ENCODE measurements at regions of chr9 and their contacts with region 1.

Region 1: GRCh38 chr9:76393963-76394679 is at the start of gene RFK:
- DNase-seq: peak; percentile 96
- H3K4me3 Mint-ChIP-seq: peak within 1 kb of the TSS; percentile 98
- H3K27ac Mint-ChIP-seq: peak within 1 kb of the TSS; percentile 93
- H3K4me1 Mint-ChIP-seq: peaks cover 33% of the 10 kb centered on the region
- H3K27me3 Mint-ChIP-seq: no peaks in the 10 kb centered on the region
- total RNA-seq, gene RFK: 7.4 to 7.7 TPM

Region 2: GRCh38 chr9:75890472-75891276 is 503.4 kb before region 1 on chr9 and contains the start of gene PCSK5:
- CTCF ChIA-PET with region 1: no interaction called
- POLR2A ChIA-PET with region 1: no interaction called
- intact Hi-C with region 1: loop called (anchors 5 kb)
- DNase-seq: peak; percentile 90
- H3K4me3 Mint-ChIP-seq: peak within 1 kb of the TSS; percentile 91
- H3K27ac Mint-ChIP-seq: peak within 1 kb of the TSS; percentile 61
- H3K4me1 Mint-ChIP-seq: peaks cover 28% of the 10 kb centered on the region
- H3K27me3 Mint-ChIP-seq: peaks cover 13% of the 10 kb centered on the region
- total RNA-seq, gene PCSK5: 2.0 to 2.1 TPM

Region 3: DNA sequence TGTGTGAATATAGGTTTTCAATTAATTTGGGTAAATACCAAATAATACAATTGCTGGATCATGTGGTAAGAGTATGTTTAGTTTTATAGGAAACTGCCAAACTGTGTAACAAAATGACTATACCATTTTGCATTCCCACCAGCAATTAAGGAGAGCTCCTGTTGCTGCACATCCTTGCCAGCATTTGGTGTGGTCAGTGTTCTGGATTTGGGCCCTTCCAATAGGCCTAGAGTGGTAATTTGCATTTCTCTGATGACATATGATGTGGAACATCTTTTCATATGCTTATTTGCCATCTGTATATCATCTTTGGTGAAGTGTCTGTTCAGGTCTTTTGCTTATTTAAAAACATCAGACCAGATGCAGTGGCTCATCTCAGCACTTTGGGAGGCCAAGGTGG is 11.7 kb after region 1 on chr9:
- CTCF ChIA-PET with region 1: interaction called, 14 read pairs
- POLR2A ChIA-PET with region 1: no interaction called
- intact Hi-C with region 1: no loop called
- DNase-seq: no peak
- H3K4me3 Mint-ChIP-seq: no peak overlapping the region
- H3K27ac Mint-ChIP-seq: no peak overlapping the region
- H3K4me1 Mint-ChIP-seq: peaks cover 13% of the 10 kb centered on the region
- H3K27me3 Mint-ChIP-seq: no peaks in the 10 kb centered on the region

Region 4: GRCh38 chr9:76441551-76442322 is 47.6 kb after region 1 on chr9:
- CTCF ChIA-PET with region 1: interaction called, 8 read pairs
- POLR2A ChIA-PET with region 1: interaction called, 15 read pairs
- intact Hi-C with region 1: loop called (anchors 1 kb)
- DNase-seq: peak; percentile 72
- H3K4me3 Mint-ChIP-seq: peak overlapping the region; percentile 77
- H3K27ac Mint-ChIP-seq: peak overlapping the region; percentile 97
- H3K4me1 Mint-ChIP-seq: peaks cover 50% of the 10 kb centered on the region
- H3K27me3 Mint-ChIP-seq: peaks cover 1% of the 10 kb centered on the region

Region 5: DNA sequence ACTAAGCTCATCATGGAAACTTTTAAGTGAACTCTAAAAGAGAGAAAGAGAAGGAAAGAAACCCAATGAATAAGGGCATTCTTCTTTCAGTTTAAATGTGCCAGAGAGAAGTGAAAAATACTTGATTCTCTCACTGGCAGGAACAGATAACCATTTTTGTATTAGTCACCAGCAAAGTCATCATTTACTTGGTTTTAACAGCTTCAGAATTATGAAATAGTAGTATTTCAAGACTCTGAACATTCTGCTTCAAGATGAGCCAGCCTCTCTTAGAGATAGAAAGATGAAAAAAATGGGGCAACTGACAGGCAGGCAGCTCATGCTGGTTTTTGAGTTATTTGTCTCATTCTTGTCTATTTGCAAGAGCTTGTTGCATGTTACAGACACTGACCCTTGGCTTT is 168.4 kb after region 1 on chr9:
- CTCF ChIA-PET with region 1: interaction called, 4 read pairs
- POLR2A ChIA-PET with region 1: no interaction called
- intact Hi-C with region 1: loop called (anchors 1 kb)
- DNase-seq: no peak
- H3K4me3 Mint-ChIP-seq: no peak overlapping the region
- H3K27ac Mint-ChIP-seq: peak overlapping the region; percentile 61
- H3K4me1 Mint-ChIP-seq: peaks cover 22% of the 10 kb centered on the region
- H3K27me3 Mint-ChIP-seq: peaks cover 1% of the 10 kb centered on the region

Region 6: DNA sequence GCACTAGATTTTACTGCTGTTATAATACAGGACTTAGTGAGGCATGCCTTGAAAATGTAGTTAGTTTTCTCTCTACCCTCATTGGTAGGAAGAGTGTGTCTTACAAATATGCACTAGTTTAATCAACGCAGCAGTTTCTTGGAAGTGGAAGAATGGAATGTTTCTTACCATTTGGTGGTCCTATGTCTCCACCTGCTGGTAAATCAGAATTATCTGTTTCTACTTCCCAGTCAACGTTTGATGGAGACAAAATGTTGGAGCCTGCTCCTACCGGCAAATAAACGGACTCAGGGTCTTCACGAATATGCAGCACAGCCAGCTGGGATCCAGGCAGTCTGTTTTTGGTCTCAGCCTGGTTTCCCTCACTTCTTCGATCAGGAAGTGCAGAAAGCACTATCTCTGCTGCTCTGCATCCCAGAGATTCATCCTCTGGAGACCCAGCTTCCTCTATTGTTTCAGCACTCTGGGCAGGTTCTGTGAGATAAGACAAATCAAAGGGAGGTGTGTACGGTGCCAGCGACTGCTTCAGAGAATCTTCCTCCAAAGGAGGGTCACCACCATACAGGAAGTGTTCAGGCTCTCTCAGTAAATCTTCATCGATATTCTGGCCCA is 310.6 kb after region 1 on chr9:
- CTCF ChIA-PET with region 1: interaction called, 8 read pairs
- POLR2A ChIA-PET with region 1: no interaction called
- intact Hi-C with region 1: loop called (anchors 2 kb)
- DNase-seq: no peak
- H3K4me3 Mint-ChIP-seq: no peak overlapping the region
- H3K27ac Mint-ChIP-seq: no peak overlapping the region
- H3K4me1 Mint-ChIP-seq: peaks cover 10% of the 10 kb centered on the region
- H3K27me3 Mint-ChIP-seq: peaks cover 36% of the 10 kb centered on the region

Measured in activated CD4-positive, alpha-beta memory T cell treated with anti-CD3 and anti-CD28 coated beads for 36 hours (primary cell).